ENCODE measurements at regions of chr11 and their contacts with region 1.

Region 1: GRCh38 chr11:76919887-76920746 is 59.4 kb downstream of the ACER3 start:
- DNase-seq: peak in 1 of 2 experiments; percentile 71
- H3K4me3 ChIP-seq: no peak overlapping the region
- H3K27ac ChIP-seq: no peak overlapping the region
- H3K4me1 ChIP-seq: peaks cover 0 to 2% (median 0%) of the 10 kb centered on the region in 4 experiments; a peak in 2 of 7 replicates
- H3K27me3 ChIP-seq: no peaks in the 10 kb centered on the region
- CTCF ChIP-seq: peak; percentile 33 to 79 (median 75)
- EP300 ChIP-seq: no peak
- POLR2A ChIP-seq: no peak
- RAD21 ChIP-seq: peak; percentile 64 to 73

Region 2: DNA sequence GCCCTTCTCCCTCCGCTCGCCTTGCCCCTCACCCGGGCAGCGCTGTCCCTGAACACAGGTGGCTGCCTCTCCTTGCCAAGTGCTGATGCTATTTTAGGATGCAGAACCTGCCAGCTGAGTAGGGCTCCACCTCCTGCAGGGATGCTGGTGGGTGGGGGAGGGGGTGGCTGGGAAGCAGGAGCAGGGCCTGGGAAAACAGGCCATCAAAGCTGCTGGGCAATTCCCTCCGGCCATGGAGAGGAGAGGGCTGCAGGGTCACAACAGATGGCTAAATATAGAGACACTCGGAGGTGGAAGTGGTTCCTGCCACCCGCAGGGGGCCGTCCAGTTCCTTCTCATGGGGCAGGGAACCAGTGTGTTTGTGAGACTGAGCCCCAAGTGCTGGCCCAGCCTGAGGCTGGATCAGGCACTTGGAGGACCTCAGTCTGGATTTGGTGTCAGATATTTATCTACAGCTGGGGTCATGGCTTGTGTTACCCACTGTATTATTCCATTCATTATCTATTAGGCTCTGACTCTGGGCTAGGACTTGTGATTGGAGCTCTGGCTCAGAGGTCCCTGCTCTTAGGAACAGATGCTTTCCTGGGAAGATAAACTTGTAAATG is 309.1 kb before region 1 on chr11:
- CTCF ChIA-PET with region 1: no interaction called
- POLR2A ChIA-PET with region 1: no interaction called
- DNase-seq: peak in 1 of 2 experiments; percentile 43
- H3K4me3 ChIP-seq: peak overlapping the region in 2 of 4 experiments; percentile 6 to 14; a peak in 1 of 8 replicates
- H3K27ac ChIP-seq: no peak overlapping the region
- H3K4me1 ChIP-seq: peaks cover 0 to 18% (median 10%) of the 10 kb centered on the region in 4 experiments; a peak in 6 of 7 replicates
- H3K27me3 ChIP-seq: no peaks in the 10 kb centered on the region
- CTCF ChIP-seq: no peak
- EP300 ChIP-seq: no peak
- POLR2A ChIP-seq: no peak
- RAD21 ChIP-seq: no peak

Region 3: DNA sequence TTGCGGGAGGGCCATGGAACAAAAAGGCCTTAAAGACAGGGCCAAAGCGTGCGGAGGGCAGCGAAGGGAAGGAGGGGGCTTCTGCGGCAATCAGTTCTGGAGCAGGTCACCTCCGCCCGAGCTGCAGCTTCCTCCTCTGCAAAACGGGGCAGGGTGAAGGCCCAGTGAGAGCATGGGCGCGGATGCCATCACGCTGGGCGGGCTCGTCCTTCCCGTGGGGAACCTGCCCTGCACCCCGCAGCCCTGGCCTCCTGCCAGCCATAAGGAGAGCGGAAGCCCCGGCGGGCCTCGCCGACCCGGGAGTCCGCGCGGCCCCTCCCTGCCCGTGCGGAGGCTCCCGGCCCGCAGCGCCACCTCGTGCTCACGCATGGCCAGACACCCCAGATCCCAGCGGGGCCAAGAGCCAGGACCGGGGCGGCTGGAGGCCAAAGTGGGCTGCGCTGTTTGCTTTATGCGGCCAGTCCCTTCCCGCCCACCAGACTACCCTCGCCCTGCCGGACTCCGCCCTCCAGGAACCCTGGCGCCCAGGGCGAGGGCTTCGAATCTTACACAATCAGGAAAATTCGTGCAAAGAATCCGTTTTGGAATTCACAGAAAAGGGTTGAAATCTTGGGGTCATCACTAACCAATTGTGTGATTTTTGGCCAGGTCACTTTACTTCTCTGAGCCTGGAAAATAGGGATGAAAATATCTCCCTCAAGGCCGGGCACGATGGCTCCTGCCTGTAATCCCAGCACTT is 120.9 kb before region 1 on chr11:
- CTCF ChIA-PET with region 1: interaction called, 27 read pairs
- POLR2A ChIA-PET with region 1: no interaction called
- DNase-seq: peak in 1 of 2 experiments; percentile 96
- H3K4me3 ChIP-seq: peak overlapping the region in 3 of 4 experiments; percentile 36 to 49 (median 48); a peak in 4 of 8 replicates
- H3K27ac ChIP-seq: no peak overlapping the region
- H3K4me1 ChIP-seq: peaks cover 3 to 16% (median 7%) of the 10 kb centered on the region in 4 experiments; a peak in 6 of 7 replicates
- H3K27me3 ChIP-seq: no peaks in the 10 kb centered on the region; a peak in 1 of 7 replicates
- CTCF ChIP-seq: peak; percentile 79 to 93 (median 82)
- EP300 ChIP-seq: no peak
- POLR2A ChIP-seq: no peak
- RAD21 ChIP-seq: peak; percentile 76 to 89

Region 4: GRCh38 chr11:76850815-76851214 is 69.3 kb before region 1 on chr11:
- CTCF ChIA-PET with region 1: interaction called, 13 read pairs
- POLR2A ChIA-PET with region 1: interaction called, 3 read pairs
- DNase-seq: no peak
- H3K4me3 ChIP-seq: no peak overlapping the region
- H3K27ac ChIP-seq: no peak overlapping the region
- H3K4me1 ChIP-seq: no peaks in the 10 kb centered on the region
- H3K27me3 ChIP-seq: no peaks in the 10 kb centered on the region
- CTCF ChIP-seq: no peak
- EP300 ChIP-seq: no peak
- POLR2A ChIP-seq: no peak
- RAD21 ChIP-seq: no peak

Region 5: DNA sequence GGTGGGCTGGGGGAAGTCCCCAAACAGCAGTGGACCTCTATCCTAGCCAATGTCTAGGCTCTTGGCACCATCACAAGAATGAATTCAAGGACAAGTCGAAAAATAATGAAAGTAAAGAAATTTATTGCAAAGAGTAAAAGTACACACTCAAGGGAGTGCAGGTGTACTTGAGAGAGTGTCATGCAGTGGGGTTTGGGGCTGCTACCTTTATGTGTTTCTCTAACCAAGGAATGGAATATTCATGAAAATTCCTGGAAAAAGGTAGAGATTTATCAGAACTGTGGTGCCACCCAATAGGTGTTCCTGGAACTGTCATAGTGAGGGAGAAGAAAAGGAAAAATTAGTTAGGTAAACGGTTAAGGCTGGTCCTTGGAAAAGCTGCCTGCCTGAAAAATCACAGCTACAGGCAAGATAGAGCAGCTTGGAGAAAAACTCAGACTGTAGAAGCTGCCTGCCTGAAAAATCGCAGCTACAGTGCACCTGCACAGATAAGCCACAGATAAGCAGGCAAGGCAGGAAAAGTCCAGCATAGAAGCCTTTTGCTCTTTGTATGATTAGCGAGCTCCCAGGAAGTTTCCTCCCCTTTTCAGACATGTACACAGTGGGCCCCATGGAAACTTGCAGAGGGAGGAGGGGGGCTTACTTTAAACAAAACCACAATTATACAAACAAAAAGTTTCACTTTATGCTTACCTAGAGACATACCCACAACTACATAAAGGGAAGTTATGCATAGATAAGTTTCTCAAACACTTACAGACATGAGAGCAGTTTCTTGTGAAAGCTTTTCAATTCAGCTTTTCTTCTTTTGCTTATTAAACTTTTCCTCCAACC is 42.7 kb after region 1 on chr11:
- CTCF ChIA-PET with region 1: interaction called, 10 read pairs
- POLR2A ChIA-PET with region 1: no interaction called
- DNase-seq: no peak
- H3K4me3 ChIP-seq: no peak overlapping the region
- H3K27ac ChIP-seq: no peak overlapping the region
- H3K4me1 ChIP-seq: no peaks in the 10 kb centered on the region
- H3K27me3 ChIP-seq: no peaks in the 10 kb centered on the region
- CTCF ChIP-seq: no peak
- EP300 ChIP-seq: no peak
- POLR2A ChIP-seq: no peak
- RAD21 ChIP-seq: no peak

Region 6: DNA sequence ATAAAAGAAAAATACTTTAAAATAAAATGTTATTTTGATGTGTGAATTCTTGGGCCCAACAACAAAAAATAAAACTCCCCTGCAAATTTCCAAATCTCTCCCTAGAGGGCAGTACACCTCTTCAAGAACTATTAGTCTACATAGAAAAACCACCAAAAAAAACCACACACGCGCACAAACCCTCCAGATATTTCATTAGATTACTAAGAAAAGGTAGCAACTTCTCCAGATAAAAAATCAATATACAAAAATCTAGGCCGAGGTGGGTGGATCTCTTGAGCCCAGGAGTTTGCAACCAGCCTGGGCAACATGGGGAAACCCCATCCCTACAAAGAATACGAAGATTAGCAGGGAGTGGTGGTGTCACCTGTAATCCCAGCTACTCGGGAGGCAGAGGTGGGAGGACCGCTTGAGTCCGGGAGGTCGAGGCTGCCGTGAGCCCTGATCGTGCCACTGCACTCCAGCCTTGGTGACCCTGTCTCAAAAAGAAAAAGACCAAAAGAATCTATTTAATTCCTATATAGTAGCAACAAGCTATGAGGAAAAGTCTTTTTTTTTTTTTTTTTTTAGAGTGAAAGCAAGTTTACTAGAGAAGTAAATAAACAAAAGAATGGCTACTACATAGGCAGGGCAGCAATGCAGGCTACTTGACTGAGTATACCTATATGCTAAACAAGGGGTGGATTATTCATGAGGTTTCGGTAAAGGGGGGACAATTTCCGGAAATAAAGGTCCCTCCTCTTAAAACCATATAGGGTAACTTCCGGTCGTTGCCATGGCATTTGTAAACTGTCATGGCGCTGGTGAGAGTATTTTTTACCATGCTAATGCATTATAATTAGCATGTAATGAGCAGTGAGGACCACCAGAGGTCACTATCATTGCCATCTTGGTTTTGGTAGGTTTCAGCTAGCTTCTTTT is 127.2 kb after region 1 on chr11:
- CTCF ChIA-PET with region 1: interaction called, 19 read pairs
- POLR2A ChIA-PET with region 1: no interaction called
- DNase-seq: peak in 1 of 2 experiments; percentile 64
- H3K4me3 ChIP-seq: peak overlapping the region in 1 of 4 experiments; percentile 34; a peak in 1 of 8 replicates
- H3K27ac ChIP-seq: no peak overlapping the region
- H3K4me1 ChIP-seq: peaks cover 0 to 4% (median 0%) of the 10 kb centered on the region in 4 experiments; a peak in 3 of 7 replicates
- H3K27me3 ChIP-seq: peaks cover 0 to 5% (median under 1%) of the 10 kb centered on the region in 4 experiments; a peak in 2 of 7 replicates
- CTCF ChIP-seq: peak in 2 of 3 experiments; percentile 55 to 60; a peak in 3 of 4 replicates
- EP300 ChIP-seq: no peak
- POLR2A ChIP-seq: no peak
- RAD21 ChIP-seq: peak; percentile 49 to 54